ENCODE measurements at regions of chr2 and their contacts with region 1.

Region 1: DNA sequence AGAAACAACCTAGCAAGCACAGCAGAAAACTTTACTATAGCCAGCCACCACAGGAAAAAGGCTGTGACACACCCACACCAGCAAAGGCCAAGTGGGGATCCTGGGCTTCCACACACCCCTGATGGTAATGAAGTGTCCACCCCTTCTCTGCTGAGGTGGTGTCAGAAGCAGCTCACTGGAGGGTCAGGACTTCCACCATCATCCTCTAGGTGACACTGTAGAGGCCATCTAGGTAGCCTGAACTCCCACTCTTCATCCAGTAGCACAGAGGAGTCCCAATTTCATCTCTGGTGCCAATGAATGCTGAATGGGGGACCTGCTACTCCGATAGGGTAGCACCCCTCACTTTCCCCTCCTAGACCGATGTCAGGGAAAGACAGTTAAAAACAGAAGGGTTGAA is 1544.4 kb downstream of the LRP1B start:
- DNase-seq: peak; percentile 54
- ATAC-seq: peak; percentile 100
- H3K4me3 ChIP-seq: no peak overlapping the region
- H3K27ac ChIP-seq: no peak overlapping the region
- H3K4me1 ChIP-seq: no peaks in the 10 kb centered on the region
- H3K27me3 ChIP-seq: no peaks in the 10 kb centered on the region
- CTCF ChIP-seq: peak; percentile 86
- EP300 ChIP-seq: no peak
- POLR2A ChIP-seq: no peak
- RAD21 ChIP-seq: 0 out of 2 replicates have a peak, but pooled peaks have one; percentile 16

Region 2: GRCh38 chr2:140696449-140696848 is 110.1 kb after region 1 on chr2:
- CTCF ChIA-PET with region 1: no interaction called
- POLR2A ChIA-PET with region 1: no interaction called
- in situ Hi-C with region 1: no loop called
- intact Hi-C with region 1: loop called (anchors 2 kb)
- DNase-seq: peak; percentile 7
- ATAC-seq: peak; percentile 79
- H3K4me3 ChIP-seq: no peak overlapping the region
- H3K27ac ChIP-seq: no peak overlapping the region
- H3K4me1 ChIP-seq: no peaks in the 10 kb centered on the region
- H3K27me3 ChIP-seq: no peaks in the 10 kb centered on the region
- CTCF ChIP-seq: peak; percentile 47
- EP300 ChIP-seq: no peak
- POLR2A ChIP-seq: no peak
- RAD21 ChIP-seq: no peak

Measured in HepG2 (cell line).